ENCODE measurements at regions of chr12 and their contacts with region 1.

Region 1: DNA sequence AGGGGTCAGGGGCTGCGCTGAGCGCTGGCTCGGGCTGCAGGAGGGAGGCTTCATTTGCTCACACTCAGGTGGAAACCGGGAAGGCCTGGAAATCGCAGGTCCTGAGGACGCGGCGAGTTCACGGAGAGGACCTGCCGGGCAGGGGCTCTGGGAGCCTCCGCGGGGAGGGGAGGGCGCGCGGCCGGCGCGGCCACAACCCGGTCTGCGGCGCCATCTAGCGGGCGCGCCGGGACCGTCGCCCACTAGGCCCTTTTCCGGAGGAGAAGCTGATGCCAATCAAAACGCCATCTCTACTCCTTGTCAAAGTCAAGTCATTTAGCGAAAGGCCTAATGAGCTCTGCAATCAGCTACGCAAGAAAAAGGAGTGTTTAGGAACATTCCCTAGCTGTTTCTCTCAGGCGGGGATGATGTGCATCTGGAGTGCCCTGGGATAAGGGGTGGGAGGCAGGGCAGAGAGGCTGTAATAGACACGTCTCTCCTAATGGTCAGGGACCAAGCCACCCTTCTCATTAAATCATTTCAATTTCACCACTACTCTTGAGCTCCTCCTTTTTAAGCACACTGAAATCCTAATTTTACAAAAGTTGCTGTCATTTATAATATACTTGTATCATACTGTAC is 885.8 kb upstream of the TMEM132C start:
- DNase-seq: peak; percentile 65
- H3K27ac ChIP-seq: no peak overlapping the region
- CTCF ChIP-seq: peak; percentile 90

Region 2: GRCh38 chr12:127108360-127109215 is 272.6 kb before region 1 on chr12:
- CTCF ChIA-PET with region 1: interaction called, 11 read pairs
- POLR2A ChIA-PET with region 1: no interaction called
- DNase-seq: peak; percentile 66
- H3K27ac ChIP-seq: no peak overlapping the region
- CTCF ChIP-seq: peak; percentile 54

Region 3: DNA sequence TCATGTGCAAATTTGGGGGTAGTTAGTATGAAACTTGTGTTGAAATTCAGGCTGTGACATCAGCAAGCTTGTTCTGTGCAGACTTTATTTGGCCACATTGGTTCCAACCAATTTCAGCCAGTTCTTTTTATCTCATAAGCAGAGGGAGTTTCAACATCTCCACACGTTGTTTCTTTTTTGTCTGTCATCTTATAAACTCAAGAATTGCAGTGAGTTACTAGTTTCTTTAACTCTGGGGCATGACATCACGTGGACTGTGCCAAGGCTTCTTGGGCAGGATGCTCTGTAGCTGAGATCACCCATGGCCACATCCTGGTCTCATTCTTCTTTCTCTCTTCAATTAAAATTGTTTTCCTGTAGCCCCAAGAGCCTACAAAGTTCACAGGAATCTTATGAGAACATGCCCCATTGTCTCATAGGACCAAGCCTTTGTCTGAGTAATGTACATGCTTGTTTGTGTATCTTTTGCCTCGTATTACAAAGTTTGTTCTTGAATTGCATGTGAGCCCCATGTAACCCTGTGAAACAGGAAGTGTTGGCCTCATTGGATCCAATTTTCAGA is 96.2 kb before region 1 on chr12:
- CTCF ChIA-PET with region 1: no interaction called
- POLR2A ChIA-PET with region 1: no interaction called
- DNase-seq: no peak
- H3K27ac ChIP-seq: no peak overlapping the region
- CTCF ChIP-seq: no peak

Region 4: DNA sequence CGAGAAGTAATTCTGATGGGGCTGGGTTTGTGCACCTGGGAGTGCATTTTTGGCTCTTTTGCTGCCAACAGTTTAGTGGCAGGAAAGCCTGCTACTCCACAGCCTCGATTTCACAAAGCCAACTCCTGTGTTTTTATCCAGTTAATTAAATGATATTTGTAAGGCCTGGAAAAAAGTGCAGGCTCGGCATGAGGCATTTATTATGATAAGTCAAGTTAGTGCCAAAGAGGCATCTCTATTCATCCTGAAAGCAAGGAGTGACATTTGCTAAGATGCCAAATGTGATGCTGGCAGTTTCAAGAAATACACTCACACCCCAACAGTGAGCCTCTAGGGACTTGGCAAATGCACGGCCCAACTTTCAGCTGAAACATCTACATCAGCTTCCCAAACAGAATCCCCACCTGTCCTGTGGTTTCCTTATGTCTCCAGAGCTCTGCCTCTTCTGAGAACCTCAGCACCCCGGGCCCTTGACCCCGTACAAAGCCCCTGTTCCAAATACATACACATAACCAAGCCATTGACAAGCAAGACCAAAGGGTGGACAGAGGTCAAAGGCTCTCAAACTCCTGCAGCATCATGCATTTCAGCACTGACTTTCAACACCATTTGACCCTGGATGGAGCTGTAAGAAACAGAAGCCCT is 69.3 kb before region 1 on chr12:
- CTCF ChIA-PET with region 1: no interaction called
- POLR2A ChIA-PET with region 1: no interaction called
- DNase-seq: no peak
- H3K27ac ChIP-seq: no peak overlapping the region
- CTCF ChIP-seq: no peak

Region 5: GRCh38 chr12:127363392-127363791 is 17.8 kb before region 1 on chr12:
- CTCF ChIA-PET with region 1: interaction called, 12 read pairs
- POLR2A ChIA-PET with region 1: no interaction called
- DNase-seq: no peak
- H3K27ac ChIP-seq: no peak overlapping the region
- CTCF ChIP-seq: no peak

Region 6: DNA sequence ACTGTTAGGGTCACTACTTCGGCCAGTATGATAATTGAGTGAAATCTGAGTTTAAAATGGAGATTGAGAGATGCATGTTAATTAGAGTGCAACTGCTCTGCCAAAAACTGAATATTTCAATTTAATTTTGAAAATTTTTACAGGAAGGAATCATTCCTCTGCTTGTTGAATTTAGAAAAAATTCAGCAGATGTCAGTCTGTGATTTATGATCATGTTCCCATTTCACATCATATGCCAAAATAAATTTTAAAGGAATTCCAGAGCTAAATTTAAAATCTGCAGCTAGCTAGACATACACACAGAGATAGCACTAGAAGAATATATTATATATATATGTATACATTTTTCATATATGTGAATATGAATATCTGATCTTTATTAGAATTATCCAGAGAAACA is 88.2 kb after region 1 on chr12:
- CTCF ChIA-PET with region 1: no interaction called
- POLR2A ChIA-PET with region 1: no interaction called
- DNase-seq: no peak
- H3K27ac ChIP-seq: no peak overlapping the region
- CTCF ChIP-seq: no peak

Measured in RWPE1 (cell line).